Body of pancreas (tissue), 4 donors: ENCODE measurements at regions of chr5 and their contacts with region 1.

Region 1: DNA sequence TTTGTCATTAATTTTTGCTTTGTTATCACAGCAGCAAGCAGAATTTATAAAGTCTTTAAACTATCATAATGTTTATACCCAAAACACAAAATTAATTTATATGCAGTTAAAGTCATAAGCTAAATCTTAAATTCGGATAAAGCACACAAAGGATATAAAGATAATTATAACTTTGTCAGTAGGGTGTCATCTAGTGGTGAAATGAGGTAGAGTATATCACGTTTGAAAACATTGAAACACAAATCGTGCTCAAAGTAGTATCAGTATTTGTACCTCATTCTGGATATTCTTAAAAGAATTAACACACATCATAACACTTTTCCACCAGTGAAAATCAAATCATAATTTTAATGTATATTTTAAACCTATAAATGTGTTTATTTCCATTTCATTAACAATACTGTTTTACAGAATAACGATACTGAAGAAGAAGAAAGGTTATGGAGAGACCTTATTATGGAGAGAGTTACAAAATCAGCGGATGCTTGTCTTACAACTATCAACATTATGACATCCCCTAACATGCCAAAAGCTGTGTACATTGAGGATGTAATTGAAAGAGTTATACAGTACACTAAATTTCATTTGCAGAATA is 129.5 kb downstream of the NIPBL start:
- DNase-seq: no peak
- ATAC-seq: no peak
- H3K4me3 ChIP-seq: no peak overlapping the region
- H3K27ac ChIP-seq: no peak overlapping the region
- H3K4me1 ChIP-seq: no peaks in the 10 kb centered on the region
- H3K27me3 ChIP-seq: no peaks in the 10 kb centered on the region
- CTCF ChIP-seq: peak; percentile 37 to 72 (median 66)
- POLR2A ChIP-seq: no peak

Region 2: DNA sequence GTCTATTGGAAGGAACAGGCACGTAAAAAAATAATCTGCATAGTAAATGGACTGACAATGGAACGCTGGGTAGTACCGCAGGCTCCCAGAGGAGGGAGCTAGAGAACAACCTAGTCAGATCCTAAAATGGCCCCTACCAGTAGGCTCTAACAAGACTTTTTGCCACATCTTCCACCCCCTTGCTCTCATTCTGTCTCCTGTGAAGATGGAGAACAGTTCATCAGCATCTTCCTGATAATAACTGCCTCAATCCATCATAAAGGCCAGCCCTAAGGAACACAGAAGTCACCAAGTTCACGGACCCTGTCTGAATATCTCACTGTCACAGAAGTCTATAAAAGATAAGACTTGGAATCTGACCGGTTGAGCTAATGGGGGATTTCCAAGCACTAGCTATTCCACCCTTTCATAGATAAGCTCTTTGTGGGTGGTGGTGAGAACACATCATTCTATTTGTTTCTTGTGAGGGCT is 266.3 kb before region 1 on chr5:
- intact Hi-C with region 1: loop called (anchors 10 kb)
- DNase-seq: peak; percentile 79 to 92 (median 88)
- ATAC-seq: peak; percentile 61
- H3K4me3 ChIP-seq: no peak overlapping the region
- H3K27ac ChIP-seq: peak overlapping the region; percentile 37 to 82 (median 68)
- H3K4me1 ChIP-seq: peaks cover 55% of the 10 kb centered on the region
- H3K27me3 ChIP-seq: peaks cover 0 to 3% of the 10 kb centered on the region in 2 donors
- CTCF ChIP-seq: peak; percentile 72 to 97 (median 91)
- POLR2A ChIP-seq: no peak